ENCODE measurements at regions of chr14 and their contacts with region 1.

Region 1: GRCh38 chr14:63800651-63801375 is 52.0 kb upstream of the SYNE2 start:
- DNase-seq: no peak
- H3K4me3 ChIP-seq: no peak overlapping the region
- H3K27ac ChIP-seq: no peak overlapping the region
- H3K4me1 ChIP-seq: peaks cover 0 to 6% of the 10 kb centered on the region in 2 donors
- H3K27me3 ChIP-seq: no peaks in the 10 kb centered on the region
- CTCF ChIP-seq: no peak
- POLR2A ChIP-seq: no peak

Region 2: GRCh38 chr14:63993992-63994391 is 193.2 kb after region 1 on chr14:
- intact Hi-C with region 1: loop called (anchors 10 kb)
- DNase-seq: no peak
- H3K4me3 ChIP-seq: no peak overlapping the region
- H3K27ac ChIP-seq: no peak overlapping the region
- H3K4me1 ChIP-seq: peaks cover 0 to 4% of the 10 kb centered on the region in 2 donors
- H3K27me3 ChIP-seq: no peaks in the 10 kb centered on the region
- CTCF ChIP-seq: peak in 3 of 6 experiments; percentile 9 to 21 (median 11)
- POLR2A ChIP-seq: no peak

Region 3: DNA sequence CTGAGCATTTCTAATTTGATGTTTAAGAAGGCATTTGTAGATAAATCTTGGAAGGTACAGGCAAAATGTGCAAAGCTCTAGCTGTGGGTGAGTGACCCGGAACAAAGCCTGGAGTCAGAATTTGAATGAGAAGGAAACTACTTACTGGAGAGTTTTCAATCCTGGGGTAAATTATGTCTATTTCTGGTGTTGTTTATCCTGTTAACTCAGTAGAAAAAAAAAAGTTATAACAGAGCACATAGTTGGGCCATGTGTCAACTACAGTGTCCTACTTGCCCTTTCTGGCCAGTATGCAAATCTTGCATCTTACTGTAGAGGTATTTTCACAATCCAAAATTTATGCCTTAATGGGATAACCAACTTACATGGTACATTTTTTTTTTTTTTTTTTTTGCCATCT is 234.3 kb after region 1 on chr14:
- intact Hi-C with region 1: no loop called
- DNase-seq: peak; percentile 23 to 49
- H3K4me3 ChIP-seq: no peak overlapping the region
- H3K27ac ChIP-seq: peak overlapping the region; percentile 71 to 79 (median 78)
- H3K4me1 ChIP-seq: peaks cover 50 to 51% of the 10 kb centered on the region in 2 donors
- H3K27me3 ChIP-seq: no peaks in the 10 kb centered on the region
- CTCF ChIP-seq: no peak
- POLR2A ChIP-seq: peak in 1 of 2 donors; percentile 20

Measured in thyroid gland (tissue), 4 donors.